Heart left ventricle (tissue), 16 donors: ENCODE measurements at regions of chr11 and their contacts with region 1.

Region 1: GRCh38 chr11:5380740-5381342 is 2.8 kb upstream of the OR51M1 start:
- DNase-seq: peak in 3 of 5 donors; percentile 19 to 36 (median 21)
- ATAC-seq: peak; percentile 64 to 83 (median 78)
- H3K4me3 ChIP-seq: no peak overlapping the region
- H3K27ac ChIP-seq: no peak overlapping the region
- H3K4me1 ChIP-seq: no peaks in the 10 kb centered on the region
- H3K27me3 ChIP-seq: no peaks in the 10 kb centered on the region
- CTCF ChIP-seq: peak; percentile 50 to 71 (median 62)
- POLR2A ChIP-seq: no peak

Region 2: DNA sequence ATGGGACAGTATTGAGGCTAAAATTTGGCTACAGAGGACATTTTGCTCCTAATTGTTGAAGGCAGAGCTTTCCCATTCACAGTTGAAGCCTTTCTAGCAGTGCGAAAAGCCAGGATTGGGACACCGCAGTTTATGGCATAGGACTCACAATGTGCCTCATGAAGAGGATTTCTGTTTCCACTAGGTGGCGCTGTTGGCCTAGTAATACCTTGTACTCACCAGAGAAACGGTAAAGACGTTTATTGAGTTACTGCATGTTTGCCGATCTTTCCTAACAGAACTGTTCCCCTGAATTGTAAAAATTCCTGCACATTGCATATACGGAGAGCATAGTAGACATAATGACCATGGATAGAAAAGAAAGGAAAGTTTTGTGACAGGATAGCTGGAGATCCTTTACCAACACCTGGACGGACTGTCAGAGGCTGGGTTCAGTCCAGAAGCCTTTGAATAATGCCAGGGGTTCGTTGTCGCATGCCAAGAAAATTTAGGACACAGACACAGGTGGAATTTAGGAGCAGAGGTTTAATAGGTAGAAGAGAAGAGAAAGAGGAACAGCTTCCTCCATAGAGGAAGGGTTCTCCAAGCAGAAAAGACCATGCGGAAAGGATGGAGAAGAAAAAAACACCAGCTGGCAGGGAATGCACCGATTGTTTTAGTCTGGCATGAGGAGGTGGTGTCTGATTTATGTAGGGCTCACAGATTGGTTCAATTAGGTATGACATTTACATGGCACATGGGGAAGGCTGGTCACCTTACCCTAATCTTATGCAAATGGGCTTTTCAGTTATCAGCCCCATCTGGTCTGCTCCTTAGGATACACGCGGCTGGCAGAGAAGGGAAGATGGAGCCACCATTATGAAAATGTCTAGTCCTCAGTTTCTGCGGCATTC is 754.4 kb before region 1 on chr11:
- intact Hi-C with region 1: loop called in 6 of 10 experiments (anchors 5 to 10 kb)
- DNase-seq: peak in 4 of 5 donors; percentile 34 to 69 (median 58)
- ATAC-seq: peak in 2 of 4 donors; percentile 72 to 75
- H3K4me3 ChIP-seq: no peak overlapping the region
- H3K27ac ChIP-seq: no peak overlapping the region
- H3K4me1 ChIP-seq: no peaks in the 10 kb centered on the region
- H3K27me3 ChIP-seq: no peaks in the 10 kb centered on the region
- CTCF ChIP-seq: peak; percentile 36 to 86 (median 68)
- POLR2A ChIP-seq: no peak

Region 3: DNA sequence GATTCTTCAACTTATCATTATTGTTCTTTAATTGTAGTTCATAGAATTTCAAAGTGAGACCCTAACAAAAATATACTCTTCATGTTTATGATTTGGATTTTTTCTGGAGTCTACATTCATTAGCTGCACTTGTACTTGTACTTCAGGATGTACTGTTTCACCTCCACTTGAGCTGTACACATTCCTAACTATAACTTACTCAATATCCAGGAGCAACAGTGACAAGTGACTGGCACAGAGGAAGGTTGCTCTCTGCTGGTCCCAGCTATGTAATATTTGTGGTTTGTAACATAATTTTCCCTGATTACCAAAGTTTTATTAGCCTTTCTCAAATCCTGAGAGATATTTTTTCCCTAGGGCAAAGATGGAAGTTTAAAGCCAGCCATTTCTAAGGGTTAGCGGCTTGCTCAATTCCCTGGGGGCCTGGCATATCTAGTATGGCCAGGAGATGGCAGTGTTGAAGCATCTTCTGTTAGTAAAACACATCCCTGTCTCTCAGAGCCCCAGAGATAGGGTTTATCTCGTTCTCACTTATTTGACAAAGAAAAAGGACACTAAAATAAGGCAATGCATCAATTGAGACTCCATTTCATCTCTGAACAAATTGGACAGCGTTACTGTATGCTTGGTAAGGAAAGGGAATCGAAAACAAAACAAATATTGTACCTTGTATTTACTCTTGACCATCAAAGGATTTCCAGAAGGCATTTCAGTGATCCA is 256.9 kb before region 1 on chr11:
- intact Hi-C with region 1: loop called in 9 of 10 experiments (anchors 2 to 10 kb)
- DNase-seq: peak; percentile 27 to 49 (median 41)
- ATAC-seq: peak in 2 of 4 donors; percentile 71 to 76
- H3K4me3 ChIP-seq: no peak overlapping the region
- H3K27ac ChIP-seq: no peak overlapping the region
- H3K4me1 ChIP-seq: no peaks in the 10 kb centered on the region
- H3K27me3 ChIP-seq: no peaks in the 10 kb centered on the region
- CTCF ChIP-seq: peak; percentile 58 to 79 (median 73)
- POLR2A ChIP-seq: no peak

Region 4: DNA sequence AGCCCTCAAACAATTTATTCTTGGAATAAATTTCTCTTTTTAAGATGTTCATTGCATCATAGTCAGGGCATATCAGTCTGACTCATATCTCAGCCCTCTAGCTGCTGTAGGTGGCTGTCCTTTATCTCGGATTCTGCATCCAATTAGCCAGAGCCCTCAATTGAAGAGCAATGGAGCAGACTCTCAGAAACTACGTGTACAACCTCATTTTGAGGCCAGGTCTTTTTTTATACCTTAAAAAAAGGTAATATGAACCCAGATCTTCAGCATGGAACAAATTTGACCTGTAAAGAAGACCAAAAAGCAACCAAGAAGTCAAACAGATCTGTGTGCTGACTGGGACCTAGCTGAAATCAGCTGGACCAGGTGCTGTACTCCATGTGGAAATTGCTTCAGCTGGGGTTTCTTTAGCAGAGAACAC is 251.4 kb before region 1 on chr11:
- intact Hi-C with region 1: loop called in 9 of 10 experiments (anchors 2 to 10 kb)
- DNase-seq: no peak
- ATAC-seq: no peak
- H3K4me3 ChIP-seq: no peak overlapping the region
- H3K27ac ChIP-seq: no peak overlapping the region
- H3K4me1 ChIP-seq: no peaks in the 10 kb centered on the region
- H3K27me3 ChIP-seq: no peaks in the 10 kb centered on the region
- CTCF ChIP-seq: no peak
- POLR2A ChIP-seq: no peak

Region 5: DNA sequence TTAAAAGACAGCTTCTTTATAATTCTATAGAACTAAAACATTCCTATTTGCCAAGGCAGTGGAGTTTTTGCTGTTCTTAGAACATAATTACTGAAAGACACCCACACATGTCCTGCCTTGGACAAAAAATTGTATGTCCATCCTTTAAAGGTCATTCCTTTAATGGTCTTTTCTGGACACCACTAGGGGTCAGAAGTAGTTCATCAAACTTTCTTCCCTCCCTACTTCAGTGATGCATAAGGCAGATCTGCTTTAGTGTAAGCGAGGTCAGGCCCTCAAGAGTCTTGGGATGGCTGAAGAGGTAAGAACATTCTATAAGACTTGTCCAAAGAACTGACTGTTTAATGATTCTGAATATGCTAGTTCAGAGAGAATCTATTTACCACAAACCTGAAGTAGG is 176.1 kb before region 1 on chr11:
- intact Hi-C with region 1: loop called in 9 of 10 experiments (anchors 2 to 5 kb)
- DNase-seq: no peak
- ATAC-seq: peak in 2 of 4 donors; percentile 48 to 57
- H3K4me3 ChIP-seq: no peak overlapping the region
- H3K27ac ChIP-seq: no peak overlapping the region
- H3K4me1 ChIP-seq: no peaks in the 10 kb centered on the region
- H3K27me3 ChIP-seq: peaks cover 0 to 4% (median 0%) of the 10 kb centered on the region in 9 donors
- CTCF ChIP-seq: peak in 10 of 12 donors; percentile 20 to 51 (median 38)
- POLR2A ChIP-seq: no peak

Region 6: DNA sequence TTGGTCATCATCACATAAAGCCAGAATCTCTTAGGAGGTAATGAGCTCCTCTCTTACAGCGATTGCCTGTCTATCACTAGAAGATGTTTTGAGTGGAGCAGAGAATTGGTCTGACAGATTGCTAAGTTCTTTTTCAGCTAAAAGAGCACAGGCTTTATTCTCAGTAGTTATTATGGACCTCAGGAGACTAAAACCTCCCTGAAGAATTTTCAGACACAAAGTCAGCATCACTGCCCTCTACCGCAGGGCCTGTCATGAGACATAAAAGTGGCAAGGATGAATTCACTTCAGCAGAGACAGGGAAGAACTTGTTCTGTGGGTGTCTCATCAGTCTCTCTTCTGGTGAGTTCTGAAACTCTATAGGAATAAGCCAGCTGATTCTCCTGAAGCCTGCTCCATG is 68.2 kb after region 1 on chr11 and contains the start of gene OR51I2:
- intact Hi-C with region 1: no loop called
- DNase-seq: no peak
- ATAC-seq: no peak
- H3K4me3 ChIP-seq: no peak within 1 kb of the TSS
- H3K27ac ChIP-seq: no peak within 1 kb of the TSS
- H3K4me1 ChIP-seq: no peaks in the 10 kb centered on the region
- H3K27me3 ChIP-seq: no peaks in the 10 kb centered on the region
- CTCF ChIP-seq: no peak
- POLR2A ChIP-seq: no peak
- total RNA-seq, gene OR51I2: not detected